ENCODE measurements at regions of chr9 and their contacts with region 1.

Region 1: GRCh38 chr9:71285191-71285656 is 163.8 kb upstream of the TRPM3 start:
- DNase-seq: peak; percentile 46
- H3K4me3 ChIP-seq: no peak overlapping the region
- H3K27ac ChIP-seq: no peak overlapping the region
- H3K4me1 ChIP-seq: no peaks in the 10 kb centered on the region
- H3K27me3 ChIP-seq: no peaks in the 10 kb centered on the region
- CTCF ChIP-seq: peak; percentile 90 to 99

Region 2: GRCh38 chr9:71308454-71308853 is 23.2 kb after region 1 on chr9:
- CTCF ChIA-PET with region 1: no interaction called
- dilution Hi-C with region 1: no loop called
- in situ Hi-C with region 1: no loop called
- intact Hi-C with region 1: no loop called
- DNase-seq: no peak
- H3K4me3 ChIP-seq: no peak overlapping the region
- H3K27ac ChIP-seq: no peak overlapping the region
- H3K4me1 ChIP-seq: no peaks in the 10 kb centered on the region
- H3K27me3 ChIP-seq: no peaks in the 10 kb centered on the region
- CTCF ChIP-seq: no peak

Region 3: DNA sequence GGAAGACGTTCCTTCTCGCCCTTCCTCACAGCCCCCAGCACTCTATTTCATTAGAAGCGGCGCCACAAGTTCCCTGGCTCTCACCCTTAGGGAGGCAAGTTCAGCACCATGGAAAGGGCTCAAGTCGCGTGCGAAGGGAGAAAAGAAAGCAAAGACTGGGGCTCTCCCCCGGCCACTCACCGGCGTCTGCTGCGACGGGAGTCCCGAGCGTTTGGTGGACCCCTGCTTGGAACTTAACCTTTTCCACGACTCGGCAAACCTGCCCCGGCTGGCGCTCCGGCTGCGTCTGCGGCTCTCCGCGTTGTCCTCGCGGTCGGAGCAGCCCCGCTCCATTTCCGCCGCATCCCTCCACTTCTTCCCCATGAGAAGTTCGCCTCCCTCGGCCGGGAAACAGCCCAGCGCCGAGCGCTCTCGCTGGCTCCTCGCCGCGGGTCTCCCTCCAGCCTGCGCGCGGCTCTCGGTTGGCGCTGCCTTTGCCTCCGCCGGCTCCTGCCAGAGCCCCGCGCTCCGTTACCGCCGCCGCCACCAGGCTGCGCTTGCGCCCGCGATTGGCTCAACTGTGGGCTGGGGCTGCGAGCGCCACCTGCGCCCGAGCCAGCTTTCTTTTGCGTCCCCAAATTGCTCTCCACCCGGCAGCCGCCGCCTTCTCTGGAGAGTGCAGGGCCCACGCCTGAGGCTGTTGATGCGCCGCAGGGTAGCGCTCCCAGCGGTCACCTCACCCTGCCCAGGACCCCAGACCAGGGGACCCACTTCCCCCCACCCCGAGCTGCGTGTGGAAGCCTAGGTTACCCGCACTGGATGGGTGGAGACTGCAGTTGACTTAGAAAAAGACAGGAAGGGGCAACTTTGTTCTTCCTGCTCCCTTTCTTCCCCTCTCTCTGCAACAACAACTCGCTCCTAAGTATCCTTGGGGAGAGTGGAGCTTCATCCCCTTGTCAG is 161.5 kb after region 1 on chr9:
- CTCF ChIA-PET with region 1: no interaction called
- dilution Hi-C with region 1: no loop called
- in situ Hi-C with region 1: no loop called
- intact Hi-C with region 1: loop called (anchors 10 kb)
- DNase-seq: peak; percentile 68
- H3K4me3 ChIP-seq: peak overlapping the region; percentile 49 to 57 (median 51)
- H3K27ac ChIP-seq: no peak overlapping the region
- H3K4me1 ChIP-seq: peaks cover 7% of the 10 kb centered on the region
- H3K27me3 ChIP-seq: peaks cover 12% of the 10 kb centered on the region
- CTCF ChIP-seq: peak; percentile 14 to 30

Region 4: DNA sequence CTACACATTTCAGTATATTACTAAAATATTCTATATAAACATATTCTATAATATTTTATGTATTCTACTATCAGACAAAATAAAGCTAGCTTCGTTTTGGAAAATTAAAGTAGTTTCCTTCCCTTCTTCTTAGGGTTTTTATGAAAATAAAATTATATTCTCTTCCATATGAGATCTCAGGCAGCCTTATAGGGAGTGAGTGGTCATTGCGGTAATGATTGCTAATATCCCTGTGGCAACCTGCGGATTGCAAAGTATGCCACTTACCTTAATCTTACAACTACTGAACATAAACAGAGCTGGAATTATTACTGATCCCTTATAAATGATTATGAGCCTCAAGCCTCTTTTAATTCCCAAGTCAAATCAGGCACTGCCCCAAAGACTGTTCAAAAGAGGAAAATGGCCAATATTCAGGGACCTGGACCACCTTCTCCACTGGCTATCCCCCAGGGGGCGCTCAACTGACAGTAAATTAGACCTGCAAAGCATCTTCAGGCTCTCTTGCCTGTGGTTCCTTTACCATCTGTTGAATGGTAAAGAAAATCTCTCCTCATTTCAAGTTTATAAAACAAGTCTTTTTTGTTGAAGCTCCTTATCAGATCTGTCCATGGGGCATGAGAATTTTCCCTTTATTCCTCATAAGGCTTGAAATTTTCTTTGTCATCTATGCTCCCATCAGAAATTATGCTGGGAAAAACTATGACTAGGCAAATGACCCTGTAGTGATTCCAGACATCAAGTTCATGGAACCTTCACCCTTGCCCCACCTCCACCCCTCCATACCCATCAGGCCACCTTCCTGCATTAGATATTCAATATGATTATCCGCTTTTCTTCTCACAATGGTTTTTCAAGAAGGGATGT is 319.2 kb after region 1 on chr9:
- CTCF ChIA-PET with region 1: no interaction called
- dilution Hi-C with region 1: no loop called
- in situ Hi-C with region 1: no loop called
- intact Hi-C with region 1: loop called (anchors 2 kb)
- DNase-seq: peak; percentile 45
- H3K4me3 ChIP-seq: no peak overlapping the region
- H3K27ac ChIP-seq: no peak overlapping the region
- H3K4me1 ChIP-seq: peaks cover 6% of the 10 kb centered on the region
- H3K27me3 ChIP-seq: no peaks in the 10 kb centered on the region
- CTCF ChIP-seq: peak; percentile 71 to 83

Region 5: GRCh38 chr9:71768388-71769174 is 483.4 kb after region 1 on chr9 and contains the start of gene CEMIP2:
- CTCF ChIA-PET with region 1: no interaction called
- dilution Hi-C with region 1: no loop called
- in situ Hi-C with region 1: no loop called
- intact Hi-C with region 1: loop called (anchors 1 kb)
- DNase-seq: peak; percentile 94
- H3K4me3 ChIP-seq: peak within 1 kb of the TSS; percentile 76 to 86 (median 84)
- H3K27ac ChIP-seq: peak within 1 kb of the TSS; percentile 69
- H3K4me1 ChIP-seq: peaks cover 37% of the 10 kb centered on the region
- H3K27me3 ChIP-seq: no peaks in the 10 kb centered on the region
- CTCF ChIP-seq: peak; percentile 18 to 54
- total RNA-seq, gene CEMIP2: 76.4 to 398 TPM

Region 6: DNA sequence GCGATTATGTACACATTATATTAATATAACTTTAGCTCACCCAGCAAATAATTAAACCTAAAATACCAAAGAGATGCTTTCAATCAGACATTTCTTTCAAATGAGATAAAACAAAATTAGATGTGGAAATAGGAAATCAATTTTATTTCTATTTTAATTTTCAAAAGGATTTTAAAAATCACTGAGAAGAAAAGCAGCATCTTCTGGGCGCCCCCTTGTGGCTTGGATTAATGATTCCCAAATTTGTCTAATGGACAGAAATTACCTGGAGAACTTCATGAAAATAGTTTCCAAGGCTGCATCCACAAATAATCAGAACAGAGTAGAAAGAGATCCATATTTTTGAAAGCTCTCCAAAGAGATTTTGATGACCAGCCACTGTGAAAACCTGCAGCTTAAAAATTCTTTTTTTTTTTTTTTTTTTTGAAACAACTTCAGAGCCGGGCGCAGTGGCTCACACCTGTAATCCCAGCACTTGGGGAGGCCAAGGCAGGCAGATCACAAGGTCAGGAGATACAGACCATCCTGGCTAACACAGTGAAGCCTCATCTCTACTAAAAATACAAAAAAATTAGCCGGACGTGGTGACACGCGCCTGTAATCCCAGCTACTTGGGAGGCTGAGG is 534.0 kb after region 1 on chr9:
- CTCF ChIA-PET with region 1: no interaction called
- dilution Hi-C with region 1: no loop called
- in situ Hi-C with region 1: loop called in 1 of 2 experiments (anchors 25 kb)
- intact Hi-C with region 1: loop called (anchors 2 kb)
- DNase-seq: no peak
- H3K4me3 ChIP-seq: no peak overlapping the region
- H3K27ac ChIP-seq: no peak overlapping the region
- H3K4me1 ChIP-seq: no peaks in the 10 kb centered on the region
- H3K27me3 ChIP-seq: no peaks in the 10 kb centered on the region
- CTCF ChIP-seq: peak; percentile 67 to 70

Region 7: DNA sequence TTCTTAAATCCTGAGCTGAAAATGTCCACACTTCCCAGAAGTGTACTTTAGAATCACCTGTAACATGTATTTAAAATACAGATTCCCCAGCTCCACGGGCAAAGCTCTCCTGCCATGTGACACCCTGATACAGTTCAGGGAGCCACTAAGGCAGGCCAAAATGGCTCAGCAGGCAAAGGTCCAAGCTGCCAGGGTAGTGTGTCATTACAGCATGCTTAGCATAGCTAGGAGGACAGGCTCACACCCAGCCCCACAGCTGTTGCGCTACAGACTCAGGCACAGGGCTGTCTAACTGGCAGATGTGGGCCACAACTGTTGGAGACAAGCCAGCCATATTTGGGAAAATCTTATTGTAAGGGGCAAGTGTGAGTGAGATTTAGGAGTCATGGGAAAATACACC is 699.2 kb after region 1 on chr9:
- CTCF ChIA-PET with region 1: no interaction called
- dilution Hi-C with region 1: no loop called
- in situ Hi-C with region 1: loop called in 1 of 2 experiments (anchors 25 kb)
- intact Hi-C with region 1: no loop called
- DNase-seq: peak; percentile 38
- H3K4me3 ChIP-seq: no peak overlapping the region
- H3K27ac ChIP-seq: no peak overlapping the region
- H3K4me1 ChIP-seq: no peaks in the 10 kb centered on the region
- H3K27me3 ChIP-seq: no peaks in the 10 kb centered on the region
- CTCF ChIP-seq: no peak